Caco-2 (cell line): ENCODE measurements at regions of chr12 and their contacts with region 1.

Region 1: GRCh38 chr12:110280779-110281548 is at the start of gene ATP2A2:
- DNase-seq: peak; percentile 89 to 91
- H3K4me3 ChIP-seq: peak within 1 kb of the TSS; percentile 96
- H3K4me3 Mint-ChIP-seq: peak within 1 kb of the TSS; percentile 89
- H3K27ac Mint-ChIP-seq: peak within 1 kb of the TSS; percentile 95
- H3K4me1 ChIP-seq: peaks cover 23% of the 10 kb centered on the region
- H3K4me1 Mint-ChIP-seq: peaks cover 13% of the 10 kb centered on the region
- H3K27me3 ChIP-seq: no peaks in the 10 kb centered on the region
- H3K27me3 Mint-ChIP-seq: no peaks in the 10 kb centered on the region
- CTCF ChIP-seq: no peak
- total RNA-seq, gene ATP2A2: 252 and 262 TPM in 2 replicates

Region 2: DNA sequence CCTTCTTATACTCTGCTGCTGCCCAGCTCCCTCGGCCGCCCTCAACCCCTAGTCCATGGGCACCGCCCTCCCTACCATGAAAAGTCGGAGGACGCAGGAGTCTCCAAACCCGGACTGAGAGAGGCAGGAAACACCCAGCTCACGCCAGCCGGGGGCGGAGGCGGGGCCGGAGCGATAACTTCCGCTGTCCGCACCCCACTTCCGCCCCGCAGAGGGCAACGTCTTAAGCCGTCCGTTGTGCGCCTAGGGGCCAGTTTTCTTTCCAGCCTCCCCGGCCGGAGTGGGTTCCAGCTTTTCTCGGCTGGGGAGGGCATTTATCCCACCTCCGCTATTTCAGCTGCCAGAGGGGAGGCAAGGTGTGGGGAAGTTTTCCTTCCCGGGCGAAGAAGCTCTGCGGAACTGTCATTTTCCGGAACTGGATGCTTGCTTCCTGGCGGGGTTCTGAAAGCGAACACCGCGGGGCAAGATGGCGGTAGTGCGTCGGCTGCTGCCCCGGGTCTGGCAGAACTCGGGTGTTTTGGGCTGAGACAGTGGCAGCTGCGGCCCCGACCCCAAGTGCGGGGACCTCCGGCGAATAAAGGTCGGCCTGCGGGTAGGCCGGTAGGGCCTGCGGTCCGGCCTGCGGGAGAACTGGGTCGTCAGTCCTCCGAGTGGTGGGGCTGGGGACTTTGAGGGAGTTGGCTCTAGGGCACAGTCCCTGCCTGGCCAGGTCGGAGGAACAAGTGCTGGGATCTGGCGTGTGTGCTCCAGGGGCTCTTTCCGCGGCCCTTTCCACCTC is 803.6 kb before region 1 on chr12 and contains the starts of genes KCTD10 and UBE3B:
- CTCF ChIA-PET with region 1: no interaction called
- POLR2A ChIA-PET with region 1: no interaction called
- intact Hi-C with region 1: no loop called
- DNase-seq: peak; percentile 89 to 90
- H3K4me3 ChIP-seq: peak within 1 kb of the TSS; percentile 95
- H3K4me3 Mint-ChIP-seq: peak within 1 kb of the TSS; percentile 99
- H3K27ac Mint-ChIP-seq: peak within 1 kb of the TSS; percentile 93
- H3K4me1 ChIP-seq: peaks cover 15% of the 10 kb centered on the region
- H3K4me1 Mint-ChIP-seq: no peaks in the 10 kb centered on the region
- H3K27me3 ChIP-seq: no peaks in the 10 kb centered on the region
- H3K27me3 Mint-ChIP-seq: no peaks in the 10 kb centered on the region
- CTCF ChIP-seq: no peak
- total RNA-seq, gene KCTD10: 40.2 and 41.5 TPM in 2 replicates
- total RNA-seq, gene UBE3B: 38.4 and 40.2 TPM in 2 replicates

Region 3: DNA sequence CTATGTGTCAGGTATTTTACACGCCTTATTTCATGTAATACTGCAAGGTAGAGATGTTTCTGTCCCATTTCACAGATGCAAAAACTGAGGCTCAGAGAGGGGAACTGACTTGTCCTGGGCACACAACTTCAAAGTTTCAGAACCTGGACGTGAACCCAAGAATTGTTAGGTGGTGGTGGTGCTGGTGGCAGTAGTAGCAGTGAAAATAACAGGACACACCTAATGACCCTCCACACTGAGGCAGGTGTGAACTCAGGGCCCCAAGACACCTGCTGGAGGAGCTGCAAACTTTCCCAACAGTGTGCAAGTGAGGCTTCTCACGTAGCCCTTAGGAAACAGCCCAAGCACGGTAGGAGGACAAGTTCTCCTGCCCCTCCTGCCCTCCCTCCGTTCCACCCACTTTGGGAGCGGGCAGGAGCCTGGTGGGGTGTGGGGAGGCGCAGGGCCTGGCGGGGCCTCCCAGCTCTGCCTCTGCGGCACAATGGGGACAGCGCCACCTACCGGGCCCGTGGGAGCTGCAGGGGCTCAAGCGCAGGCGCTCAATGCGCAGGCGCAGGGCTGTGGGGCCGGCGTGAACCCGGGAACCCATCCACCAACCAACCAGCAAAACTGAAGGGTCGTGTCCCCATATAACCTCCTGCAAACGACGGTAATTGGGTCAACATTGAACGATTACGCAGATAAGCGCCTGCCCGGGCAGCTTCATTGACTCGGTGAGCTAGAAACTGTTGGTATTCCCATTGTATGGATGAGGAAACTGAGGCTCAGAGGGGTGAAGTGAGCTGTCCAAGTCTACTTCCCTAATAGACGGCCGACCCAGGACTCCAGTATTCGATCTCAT is 435.8 kb before region 1 on chr12:
- CTCF ChIA-PET with region 1: no interaction called
- POLR2A ChIA-PET with region 1: no interaction called
- intact Hi-C with region 1: no loop called
- DNase-seq: peak; percentile 82 to 93
- H3K4me3 ChIP-seq: peak overlapping the region; percentile 15; the same call in 1 of the 2 replicates
- H3K4me3 Mint-ChIP-seq: peak overlapping the region; percentile 14
- H3K27ac Mint-ChIP-seq: no peak overlapping the region
- H3K4me1 ChIP-seq: no peaks in the 10 kb centered on the region
- H3K4me1 Mint-ChIP-seq: no peaks in the 10 kb centered on the region
- H3K27me3 ChIP-seq: no peaks in the 10 kb centered on the region
- H3K27me3 Mint-ChIP-seq: no peaks in the 10 kb centered on the region
- CTCF ChIP-seq: peak; percentile 94 to 96

Region 4: DNA sequence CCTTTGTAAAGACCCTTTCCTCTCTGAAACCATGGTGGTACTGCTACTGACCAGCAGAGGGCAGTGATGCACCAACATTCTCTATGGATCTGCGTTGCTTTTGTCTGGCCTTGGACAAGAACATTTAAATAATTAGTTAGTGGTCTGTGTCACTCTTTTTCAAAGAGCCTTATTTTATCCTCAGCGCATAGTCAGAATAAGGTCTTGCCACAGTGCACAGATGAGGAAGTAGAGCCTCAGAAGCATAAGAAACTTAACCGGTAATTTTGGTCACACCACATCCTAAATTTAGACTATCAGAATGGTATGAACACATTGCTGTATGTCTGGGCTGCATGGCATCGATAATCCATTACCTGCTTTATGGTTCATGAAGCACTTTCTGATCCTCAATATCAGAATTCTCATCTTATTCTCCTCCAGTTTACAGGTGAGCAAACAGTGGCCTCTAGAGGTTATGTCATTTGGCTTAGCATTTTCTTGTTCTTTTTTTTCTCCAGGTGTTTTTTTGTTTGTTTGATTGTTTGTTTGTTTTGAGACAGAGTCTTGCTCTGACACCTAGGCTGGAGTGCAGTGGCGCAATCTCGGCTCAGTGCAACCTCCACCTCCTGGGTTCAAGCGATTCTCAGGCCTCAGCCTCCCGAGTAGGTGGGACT is 180.5 kb before region 1 on chr12:
- CTCF ChIA-PET with region 1: no interaction called
- POLR2A ChIA-PET with region 1: no interaction called
- intact Hi-C with region 1: loop called (anchors 5 kb)
- DNase-seq: peak; percentile 65 to 75
- H3K4me3 ChIP-seq: no peak overlapping the region
- H3K4me3 Mint-ChIP-seq: no peak overlapping the region
- H3K27ac Mint-ChIP-seq: no peak overlapping the region
- H3K4me1 ChIP-seq: peaks cover 3% of the 10 kb centered on the region; the same call in 1 of the 2 replicates
- H3K4me1 Mint-ChIP-seq: no peaks in the 10 kb centered on the region
- H3K27me3 ChIP-seq: no peaks in the 10 kb centered on the region
- H3K27me3 Mint-ChIP-seq: no peaks in the 10 kb centered on the region
- CTCF ChIP-seq: peak; percentile 86 to 91

Region 5: GRCh38 chr12:110124184-110124995 is 156.6 kb before region 1 on chr12 and contains the start of gene IFT81:
- CTCF ChIA-PET with region 1: no interaction called
- POLR2A ChIA-PET with region 1: interaction called, 3 read pairs
- intact Hi-C with region 1: loop called (anchors 5 kb)
- DNase-seq: peak; percentile 94 to 95
- H3K4me3 ChIP-seq: peak within 1 kb of the TSS; percentile 65
- H3K4me3 Mint-ChIP-seq: peak within 1 kb of the TSS; percentile 78
- H3K27ac Mint-ChIP-seq: peak within 1 kb of the TSS; percentile 85
- H3K4me1 ChIP-seq: no peaks in the 10 kb centered on the region
- H3K4me1 Mint-ChIP-seq: no peaks in the 10 kb centered on the region
- H3K27me3 ChIP-seq: no peaks in the 10 kb centered on the region
- H3K27me3 Mint-ChIP-seq: no peaks in the 10 kb centered on the region
- CTCF ChIP-seq: peak in 1 of 2 experiments; percentile 19
- total RNA-seq, gene IFT81: 5.9 and 6.3 TPM in 2 replicates

Region 6: GRCh38 chr12:110234755-110235154 is 46.2 kb before region 1 on chr12:
- CTCF ChIA-PET with region 1: interaction called, 3 read pairs
- POLR2A ChIA-PET with region 1: interaction called, 3 read pairs
- intact Hi-C with region 1: loop called (anchors 5 kb)
- DNase-seq: no peak
- H3K4me3 ChIP-seq: no peak overlapping the region
- H3K4me3 Mint-ChIP-seq: no peak overlapping the region
- H3K27ac Mint-ChIP-seq: peak overlapping the region; percentile 46
- H3K4me1 ChIP-seq: peaks cover 22% of the 10 kb centered on the region
- H3K4me1 Mint-ChIP-seq: peaks cover 21% of the 10 kb centered on the region
- H3K27me3 ChIP-seq: no peaks in the 10 kb centered on the region
- H3K27me3 Mint-ChIP-seq: no peaks in the 10 kb centered on the region
- CTCF ChIP-seq: no peak

Region 7: GRCh38 chr12:110247333-110248104 is 33.4 kb before region 1 on chr12:
- CTCF ChIA-PET with region 1: interaction called, 8 read pairs
- POLR2A ChIA-PET with region 1: interaction called, 41 read pairs
- intact Hi-C with region 1: loop called (anchors 1 kb)
- DNase-seq: peak; percentile 90 to 95
- H3K4me3 ChIP-seq: 0 out of 2 replicates have a peak overlapping the region, but pooled peaks have one; percentile 8
- H3K4me3 Mint-ChIP-seq: peak overlapping the region; percentile 62
- H3K27ac Mint-ChIP-seq: peak overlapping the region; percentile 86
- H3K4me1 ChIP-seq: peaks cover 53% of the 10 kb centered on the region
- H3K4me1 Mint-ChIP-seq: peaks cover 47% of the 10 kb centered on the region
- H3K27me3 ChIP-seq: no peaks in the 10 kb centered on the region
- H3K27me3 Mint-ChIP-seq: no peaks in the 10 kb centered on the region
- CTCF ChIP-seq: no peak

Region 8: DNA sequence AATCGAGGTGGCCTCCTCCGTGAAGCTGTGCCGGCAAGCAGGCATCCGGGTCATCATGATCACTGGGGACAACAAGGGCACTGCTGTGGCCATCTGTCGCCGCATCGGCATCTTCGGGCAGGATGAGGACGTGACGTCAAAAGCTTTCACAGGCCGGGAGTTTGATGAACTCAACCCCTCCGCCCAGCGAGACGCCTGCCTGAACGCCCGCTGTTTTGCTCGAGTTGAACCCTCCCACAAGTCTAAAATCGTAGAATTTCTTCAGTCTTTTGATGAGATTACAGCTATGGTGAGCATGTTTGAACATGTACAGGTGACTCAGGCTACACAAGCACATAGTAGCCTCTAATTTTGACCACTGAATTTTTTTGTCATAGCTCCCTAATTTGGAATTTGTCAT is 59.7 kb after region 1 on chr12:
- CTCF ChIA-PET with region 1: no interaction called
- POLR2A ChIA-PET with region 1: no interaction called
- intact Hi-C with region 1: no loop called
- DNase-seq: no peak
- H3K4me3 ChIP-seq: no peak overlapping the region
- H3K4me3 Mint-ChIP-seq: no peak overlapping the region
- H3K27ac Mint-ChIP-seq: no peak overlapping the region
- H3K4me1 ChIP-seq: no peaks in the 10 kb centered on the region
- H3K4me1 Mint-ChIP-seq: no peaks in the 10 kb centered on the region
- H3K27me3 ChIP-seq: no peaks in the 10 kb centered on the region
- H3K27me3 Mint-ChIP-seq: no peaks in the 10 kb centered on the region
- CTCF ChIP-seq: no peak